Motor neuron (in vitro differentiated cells): ENCODE measurements at regions of chr4 and their contacts with region 1.

Region 1: DNA sequence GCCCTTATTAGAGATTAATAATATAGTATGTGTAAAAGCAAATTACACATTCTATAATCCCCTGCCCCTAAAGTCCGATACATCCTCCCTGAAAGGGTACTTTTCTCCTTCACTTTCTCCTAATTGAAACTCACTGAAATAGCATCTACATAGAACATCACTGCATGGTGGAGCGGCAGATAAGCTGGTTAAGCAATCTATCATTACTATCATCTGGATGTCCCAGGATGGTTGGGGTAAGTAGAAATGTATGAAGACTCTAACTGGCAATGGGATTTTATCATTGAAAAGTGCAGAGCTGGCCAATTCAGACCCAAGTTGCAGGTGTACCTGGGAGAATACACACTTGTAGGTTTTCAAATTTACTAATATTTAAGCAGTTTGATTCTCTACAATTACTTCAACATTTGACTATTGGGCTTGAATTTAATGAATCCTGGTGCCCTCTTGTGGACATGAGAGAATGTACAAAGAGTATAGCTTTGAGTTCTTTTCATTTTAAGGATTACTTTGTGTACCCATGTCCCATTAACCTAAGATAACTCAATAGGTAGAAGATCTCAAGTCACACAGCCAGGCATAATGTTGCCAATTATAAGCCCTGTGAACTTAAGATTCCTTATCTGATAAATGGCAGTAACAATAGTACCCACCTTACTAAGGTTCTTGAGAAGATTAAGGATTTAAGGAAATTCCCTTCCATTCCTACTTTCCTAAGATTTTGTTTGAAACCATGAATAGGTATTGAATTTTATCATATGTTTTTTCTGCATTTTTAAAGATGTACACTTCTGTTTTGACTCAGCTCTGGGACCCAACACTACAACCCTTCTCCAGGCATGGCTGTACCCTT is 69.8 kb downstream of the SHROOM3 start:
- ATAC-seq: peak; percentile 35 to 70 (median 46)
- H3K4me3 ChIP-seq: no peak overlapping the region
- H3K27ac ChIP-seq: no peak overlapping the region
- H3K4me1 ChIP-seq: no peaks in the 10 kb centered on the region

Region 2: GRCh38 chr4:76430519-76431388 is 74.1 kb before region 1 on chr4:
- in situ Hi-C with region 1: loop called in 4 of 9 experiments (anchors 5 to 10 kb)
- ATAC-seq: peak; percentile 33 to 77 (median 52)
- H3K4me3 ChIP-seq: no peak overlapping the region
- H3K27ac ChIP-seq: no peak overlapping the region
- H3K4me1 ChIP-seq: peaks cover 10 to 12% of the 10 kb centered on the region in 2 donors

Region 3: GRCh38 chr4:76748649-76749048 is 243.8 kb after region 1 on chr4:
- in situ Hi-C with region 1: loop called in 4 of 9 experiments (anchors 5 to 25 kb)
- ATAC-seq: peak in 5 of 8 experiments; percentile 20 to 52 (median 40)
- H3K4me3 ChIP-seq: no peak overlapping the region
- H3K27ac ChIP-seq: no peak overlapping the region
- H3K4me1 ChIP-seq: peaks cover 0 to under 1% of the 10 kb centered on the region in 2 donors

Region 4: GRCh38 chr4:76758290-76758882 is 253.5 kb after region 1 on chr4:
- in situ Hi-C with region 1: loop called in 2 of 9 experiments (anchors 25 kb)
- ATAC-seq: peak; percentile 50 to 86 (median 64)
- H3K4me3 ChIP-seq: no peak overlapping the region
- H3K27ac ChIP-seq: no peak overlapping the region
- H3K4me1 ChIP-seq: no peaks in the 10 kb centered on the region

Region 5: GRCh38 chr4:77367638-77368037 is 862.8 kb after region 1 on chr4:
- in situ Hi-C with region 1: no loop called
- ATAC-seq: no peak
- H3K4me3 ChIP-seq: no peak overlapping the region
- H3K27ac ChIP-seq: no peak overlapping the region
- H3K4me1 ChIP-seq: no peaks in the 10 kb centered on the region